Astrocyte of the cerebellum (primary cell): ENCODE measurements at regions of chr17 and their contacts with region 1.

Region 1: GRCh38 chr17:48593840-48594537 is 410 bp upstream of the HOXB5 start:
- DNase-seq: peak; percentile 88
- H3K4me3 ChIP-seq: peak overlapping the region; percentile 60
- CTCF ChIP-seq: peak; percentile 92

Region 2: DNA sequence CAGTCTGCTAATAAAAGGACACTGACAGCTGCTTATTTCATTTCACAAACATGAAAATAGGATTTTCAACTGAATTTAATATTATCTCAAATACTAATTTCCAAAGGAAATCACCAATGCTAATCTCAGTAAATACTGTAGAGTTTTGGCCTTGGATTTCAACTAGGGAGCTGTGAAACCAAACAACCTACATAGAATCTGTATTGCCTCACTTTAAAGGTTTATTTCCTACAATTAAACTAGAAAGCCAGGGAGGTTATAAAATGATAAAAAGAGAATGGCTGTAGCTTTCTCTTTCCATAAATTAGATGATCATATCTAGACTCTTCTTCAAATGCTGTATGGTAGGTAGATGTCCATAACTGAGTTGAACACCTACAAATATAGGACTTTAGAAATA is 246.8 kb before region 1 on chr17:
- in situ Hi-C with region 1: loop called (anchors 5 kb)
- DNase-seq: no peak
- H3K4me3 ChIP-seq: no peak overlapping the region
- CTCF ChIP-seq: no peak